ENCODE measurements at regions of chr16 and their contacts with region 1.

Region 1: GRCh38 chr16:78770353-78771091 is 671.1 kb downstream of the WWOX start:
- DNase-seq: peak; percentile 77
- CTCF ChIP-seq: peak; percentile 93

Region 2: GRCh38 chr16:78705694-78706093 is 64.8 kb before region 1 on chr16:
- CTCF ChIA-PET with region 1: interaction called, 31 read pairs
- POLR2A ChIA-PET with region 1: no interaction called
- DNase-seq: peak; percentile 24
- CTCF ChIP-seq: peak; percentile 46

Region 3: GRCh38 chr16:78780808-78781207 is 10.3 kb after region 1 on chr16:
- CTCF ChIA-PET with region 1: interaction called, 20 read pairs
- POLR2A ChIA-PET with region 1: no interaction called
- DNase-seq: no peak
- CTCF ChIP-seq: no peak